ENCODE measurements at regions of chr5 and their contacts with region 1.

Region 1: GRCh38 chr5:55102348-55102747 is at the start of gene GZMA:
- DNase-seq: no peak
- H3K4me3 ChIP-seq: peak within 1 kb of the TSS in 1 of 4 donors; percentile 13
- H3K27ac ChIP-seq: peak within 1 kb of the TSS in 3 of 4 donors; percentile 34 to 41 (median 38)
- H3K4me1 ChIP-seq: no peaks in the 10 kb centered on the region
- H3K27me3 ChIP-seq: no peaks in the 10 kb centered on the region
- CTCF ChIP-seq: no peak
- EP300 ChIP-seq: no peak
- POLR2A ChIP-seq: no peak
- total RNA-seq, gene GZMA: 7.6 to 8.3 TPM in 2 of 4 donors, not detected in the others

Region 2: GRCh38 chr5:55055184-55055583 is 47.2 kb before region 1 on chr5:
- in situ Hi-C with region 1: no loop called
- intact Hi-C with region 1: loop called (anchors 5 kb)
- DNase-seq: no peak
- H3K4me3 ChIP-seq: no peak overlapping the region
- H3K27ac ChIP-seq: no peak overlapping the region
- H3K4me1 ChIP-seq: no peaks in the 10 kb centered on the region
- H3K27me3 ChIP-seq: no peaks in the 10 kb centered on the region
- CTCF ChIP-seq: no peak
- EP300 ChIP-seq: no peak
- POLR2A ChIP-seq: no peak

Region 3: GRCh38 chr5:55960779-55961178 is 858.4 kb after region 1 on chr5:
- in situ Hi-C with region 1: no loop called
- intact Hi-C with region 1: loop called (anchors 5 kb)
- DNase-seq: no peak
- H3K4me3 ChIP-seq: no peak overlapping the region
- H3K27ac ChIP-seq: no peak overlapping the region
- H3K4me1 ChIP-seq: no peaks in the 10 kb centered on the region
- H3K27me3 ChIP-seq: no peaks in the 10 kb centered on the region
- CTCF ChIP-seq: no peak
- EP300 ChIP-seq: no peak
- POLR2A ChIP-seq: no peak